Heart right ventricle (tissue), 16 donors: ENCODE measurements at regions of chr7 and their contacts with region 1.

Region 1: GRCh38 chr7:100059251-100059739 is 9.7 kb downstream of the ZSCAN21 start:
- DNase-seq: no peak
- ATAC-seq: no peak
- H3K4me3 ChIP-seq: no peak overlapping the region
- H3K27ac ChIP-seq: no peak overlapping the region
- H3K4me1 ChIP-seq: no peaks in the 10 kb centered on the region
- H3K27me3 ChIP-seq: no peaks in the 10 kb centered on the region
- CTCF ChIP-seq: no peak

Region 2: DNA sequence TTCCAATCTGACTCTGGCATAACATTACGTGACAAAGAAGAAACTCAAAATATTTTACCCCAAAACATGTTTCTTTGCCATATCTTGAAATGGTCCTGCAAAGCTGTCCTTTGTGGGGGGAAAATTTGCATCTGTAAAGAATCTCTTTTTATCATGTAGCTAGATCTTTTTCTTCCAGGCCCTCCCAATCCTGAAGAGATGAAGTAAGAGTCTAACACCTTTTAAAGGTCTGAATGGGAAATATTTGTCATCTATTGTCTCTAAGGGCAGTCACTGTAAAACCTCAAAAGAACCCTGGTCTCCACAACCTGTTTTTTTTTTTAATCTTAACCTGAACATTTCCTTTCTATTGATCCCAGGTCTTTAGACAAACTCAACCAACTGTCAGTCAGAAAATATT is 191.0 kb before region 1 on chr7:
- intact Hi-C with region 1: no loop called
- DNase-seq: no peak
- ATAC-seq: no peak
- H3K4me3 ChIP-seq: no peak overlapping the region
- H3K27ac ChIP-seq: no peak overlapping the region
- H3K4me1 ChIP-seq: no peaks in the 10 kb centered on the region
- H3K27me3 ChIP-seq: no peaks in the 10 kb centered on the region
- CTCF ChIP-seq: no peak

Region 3: DNA sequence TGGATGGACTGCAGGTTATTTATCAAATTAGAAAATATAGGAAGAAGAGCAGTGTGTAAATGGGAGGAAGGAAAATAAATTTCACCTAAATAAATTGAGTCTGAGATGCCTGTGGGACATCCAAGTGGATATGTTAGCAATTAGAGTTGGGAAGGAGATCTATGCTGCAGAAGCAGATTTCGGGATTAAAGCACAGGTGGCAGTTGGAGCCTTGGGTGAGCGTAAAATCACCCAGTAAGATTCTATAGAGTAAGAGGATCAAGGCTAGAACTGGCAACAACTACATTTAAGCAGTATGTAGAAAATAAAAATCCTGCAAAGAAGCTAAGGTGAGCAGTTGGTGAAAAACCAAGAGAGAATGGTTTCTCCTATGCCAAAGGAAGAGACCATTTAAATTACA is 148.3 kb before region 1 on chr7:
- intact Hi-C with region 1: loop called in 3 of 10 experiments (anchors 5 to 10 kb)
- DNase-seq: no peak
- ATAC-seq: no peak
- H3K4me3 ChIP-seq: no peak overlapping the region
- H3K27ac ChIP-seq: no peak overlapping the region
- H3K4me1 ChIP-seq: peaks cover 0 to 14% (median 2%) of the 10 kb centered on the region in 9 donors
- H3K27me3 ChIP-seq: no peaks in the 10 kb centered on the region
- CTCF ChIP-seq: no peak

Region 4: GRCh38 chr7:100015232-100016209 is 43.8 kb before region 1 on chr7 and contains the start of gene ZKSCAN1:
- intact Hi-C with region 1: loop called in 2 of 10 experiments (anchors 2 to 5 kb)
- DNase-seq: peak; percentile 85 to 89
- ATAC-seq: peak; percentile 98 to 99 (median 99)
- H3K4me3 ChIP-seq: peak within 1 kb of the TSS; percentile 90 to 100 (median 99)
- H3K27ac ChIP-seq: peak within 1 kb of the TSS; percentile 82 to 100 (median 99)
- H3K4me1 ChIP-seq: peaks cover 0 to 42% (median 34%) of the 10 kb centered on the region in 9 donors
- H3K27me3 ChIP-seq: no peaks in the 10 kb centered on the region
- CTCF ChIP-seq: peak in 1 of 9 donors; percentile 8
- total RNA-seq, gene ZKSCAN1: 37.4 to 68.9 (median 49.7) TPM

Region 5: DNA sequence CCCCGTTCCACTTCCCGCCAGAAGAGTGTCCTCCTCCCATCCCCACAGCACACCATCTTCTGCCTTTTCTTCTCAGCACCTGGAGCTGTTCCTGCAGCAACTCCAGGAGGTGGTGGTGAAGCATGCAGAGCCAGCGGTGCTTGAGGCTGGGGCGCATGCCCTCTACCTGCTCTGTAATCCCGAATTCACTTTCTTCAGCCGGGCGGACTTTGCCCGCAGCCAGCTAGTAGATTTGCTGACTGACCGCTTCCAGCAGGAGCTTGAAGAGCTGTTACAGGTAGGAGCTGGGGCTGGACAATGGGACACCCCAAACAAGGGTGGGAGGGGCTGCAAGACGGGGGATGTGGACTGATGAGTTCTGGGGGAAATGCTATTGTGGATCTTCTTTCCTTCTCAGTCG is 141.4 kb after region 1 on chr7:
- intact Hi-C with region 1: no loop called
- DNase-seq: no peak
- ATAC-seq: no peak
- H3K4me3 ChIP-seq: no peak overlapping the region
- H3K27ac ChIP-seq: no peak overlapping the region
- H3K4me1 ChIP-seq: no peaks in the 10 kb centered on the region
- H3K27me3 ChIP-seq: peaks cover 0 to 6% (median 3%) of the 10 kb centered on the region in 7 donors
- CTCF ChIP-seq: no peak